B cell (primary cell): ENCODE measurements at regions of chr6 and their contacts with region 1.

Region 1: GRCh38 chr6:5471044-5471443 is 209.7 kb downstream of the FARS2 start:
- DNase-seq: peak; percentile 67
- ATAC-seq: peak; percentile 71
- H3K4me3 ChIP-seq: no peak overlapping the region
- H3K4me3 Mint-ChIP-seq: no peak overlapping the region
- H3K27ac ChIP-seq: no peak overlapping the region
- H3K27ac Mint-ChIP-seq: no peak overlapping the region
- H3K4me1 ChIP-seq: peaks cover 3 to 4% of the 10 kb centered on the region in 2 donors
- H3K4me1 Mint-ChIP-seq: no peaks in the 10 kb centered on the region
- H3K27me3 ChIP-seq: no peaks in the 10 kb centered on the region
- H3K27me3 Mint-ChIP-seq: no peaks in the 10 kb centered on the region
- CTCF ChIP-seq: peak; percentile 91

Region 2: GRCh38 chr6:5518936-5519491 is 48.0 kb after region 1 on chr6:
- CTCF ChIA-PET with region 1: interaction called, 11 read pairs
- POLR2A ChIA-PET with region 1: no interaction called
- intact Hi-C with region 1: no loop called
- DNase-seq: no peak
- ATAC-seq: no peak
- H3K4me3 ChIP-seq: no peak overlapping the region
- H3K4me3 Mint-ChIP-seq: no peak overlapping the region
- H3K27ac ChIP-seq: no peak overlapping the region
- H3K27ac Mint-ChIP-seq: no peak overlapping the region
- H3K4me1 ChIP-seq: peaks cover 5% of the 10 kb centered on the region in 2 donors
- H3K4me1 Mint-ChIP-seq: peaks cover 18% of the 10 kb centered on the region
- H3K27me3 ChIP-seq: no peaks in the 10 kb centered on the region
- H3K27me3 Mint-ChIP-seq: no peaks in the 10 kb centered on the region
- CTCF ChIP-seq: no peak

Region 3: DNA sequence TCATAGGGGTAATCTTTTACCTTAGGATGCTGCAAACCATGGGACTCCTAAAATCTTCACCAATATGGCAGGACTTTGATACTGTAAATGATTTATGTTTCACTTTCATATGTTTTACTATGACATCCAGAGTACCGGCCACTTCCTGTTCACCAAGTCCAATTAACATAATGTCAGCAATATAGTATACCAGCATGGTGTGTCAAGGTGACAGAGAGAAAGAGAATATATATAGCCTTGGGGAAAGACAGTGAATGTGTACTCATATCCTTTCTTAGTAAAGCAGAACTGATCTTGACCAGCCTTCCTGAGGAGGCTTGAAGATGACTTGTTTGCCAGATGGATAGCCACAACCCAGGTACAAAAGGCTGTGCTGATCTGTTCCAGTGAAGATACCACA is 407.7 kb after region 1 on chr6:
- CTCF ChIA-PET with region 1: interaction called, 9 read pairs
- POLR2A ChIA-PET with region 1: no interaction called
- intact Hi-C with region 1: loop called (anchors 1 kb)
- DNase-seq: no peak
- ATAC-seq: no peak
- H3K4me3 ChIP-seq: no peak overlapping the region
- H3K4me3 Mint-ChIP-seq: no peak overlapping the region
- H3K27ac ChIP-seq: no peak overlapping the region
- H3K27ac Mint-ChIP-seq: no peak overlapping the region
- H3K4me1 ChIP-seq: no peaks in the 10 kb centered on the region
- H3K4me1 Mint-ChIP-seq: no peaks in the 10 kb centered on the region
- H3K27me3 ChIP-seq: no peaks in the 10 kb centered on the region
- H3K27me3 Mint-ChIP-seq: no peaks in the 10 kb centered on the region
- CTCF ChIP-seq: no peak

Region 4: DNA sequence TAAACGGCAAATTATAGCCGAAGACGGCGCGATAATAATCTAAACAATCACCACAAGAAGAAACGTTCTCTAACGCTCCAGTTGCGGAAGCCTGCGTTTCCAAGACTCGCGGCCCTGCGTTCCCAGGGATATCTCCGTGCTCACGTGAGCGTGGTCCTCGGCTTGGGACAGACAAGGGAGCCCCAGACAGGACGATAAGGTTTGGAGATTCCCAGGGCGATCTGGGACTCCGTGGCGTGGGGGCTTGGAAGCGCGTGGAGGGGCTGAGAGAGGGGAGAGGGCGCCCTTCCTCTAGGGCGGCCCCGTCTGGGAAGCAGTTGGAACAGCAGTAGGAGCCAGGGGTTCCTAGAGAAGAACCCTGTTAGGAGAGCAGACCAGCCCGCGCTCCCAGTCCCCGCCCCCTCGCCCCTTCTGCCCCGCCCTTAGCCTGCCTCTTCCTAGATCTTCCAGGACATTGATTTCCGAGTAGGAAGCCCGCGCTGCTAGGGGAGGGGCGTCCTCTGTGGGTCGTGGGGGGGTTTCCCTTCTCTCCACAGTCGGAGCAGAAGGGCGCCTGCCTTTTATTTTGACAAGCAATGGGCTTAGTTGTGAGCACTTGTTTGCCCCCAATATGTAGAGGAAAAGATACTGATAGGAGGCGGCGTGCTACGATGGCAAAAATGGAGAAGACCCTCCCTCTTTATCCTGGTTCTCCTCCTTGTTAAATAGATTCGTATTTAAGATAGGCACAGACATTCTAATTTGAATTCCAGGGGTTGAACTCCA is 525.1 kb after region 1 on chr6:
- CTCF ChIA-PET with region 1: interaction called, 8 read pairs
- POLR2A ChIA-PET with region 1: no interaction called
- intact Hi-C with region 1: loop called (anchors 1 kb)
- DNase-seq: peak; percentile 46
- ATAC-seq: no peak
- H3K4me3 ChIP-seq: peak overlapping the region; percentile 45 to 94 (median 58)
- H3K4me3 Mint-ChIP-seq: peak overlapping the region; percentile 90
- H3K27ac ChIP-seq: no peak overlapping the region
- H3K27ac Mint-ChIP-seq: peak overlapping the region; percentile 74
- H3K4me1 ChIP-seq: peaks cover 53 to 65% of the 10 kb centered on the region in 2 donors
- H3K4me1 Mint-ChIP-seq: peaks cover 43% of the 10 kb centered on the region
- H3K27me3 ChIP-seq: peaks cover 2 to 91% (median 88%) of the 10 kb centered on the region in 4 experiments
- H3K27me3 Mint-ChIP-seq: peaks cover 86% of the 10 kb centered on the region
- CTCF ChIP-seq: no peak